Cardiac septum (tissue), 1 donor: ENCODE measurements at regions of chr7 and their contacts with region 1.

Region 1: DNA sequence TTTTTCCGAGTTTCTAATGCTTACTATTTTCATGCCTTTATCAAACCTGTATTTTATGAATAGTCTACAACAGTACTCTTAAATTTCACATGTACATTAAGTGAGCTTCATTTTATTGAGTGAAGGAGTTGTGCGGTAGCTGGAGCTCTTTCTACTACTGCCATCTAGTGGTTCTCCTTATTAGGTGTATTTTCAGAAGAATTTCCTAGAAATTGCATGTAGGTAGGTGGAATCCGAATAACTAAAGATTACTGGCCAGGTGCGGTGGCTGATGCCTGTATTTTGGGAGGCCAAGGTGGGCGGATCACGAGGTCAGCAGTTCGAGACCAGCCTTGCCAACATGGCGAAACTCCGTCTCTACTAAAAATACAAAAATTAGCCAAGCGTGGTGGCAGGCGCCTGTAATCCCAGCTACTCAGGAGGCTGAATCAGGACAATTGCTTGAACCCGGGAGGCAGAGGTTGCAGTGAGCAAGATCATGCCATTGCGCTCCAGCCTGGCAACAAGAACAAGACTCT is 38.3 kb downstream of the LRRC72 start:
- DNase-seq: no peak

Region 2: GRCh38 chr7:16078076-16078952 is 486.7 kb before region 1 on chr7:
- intact Hi-C with region 1: loop called (anchors 2 kb)
- DNase-seq: no peak

Region 3: DNA sequence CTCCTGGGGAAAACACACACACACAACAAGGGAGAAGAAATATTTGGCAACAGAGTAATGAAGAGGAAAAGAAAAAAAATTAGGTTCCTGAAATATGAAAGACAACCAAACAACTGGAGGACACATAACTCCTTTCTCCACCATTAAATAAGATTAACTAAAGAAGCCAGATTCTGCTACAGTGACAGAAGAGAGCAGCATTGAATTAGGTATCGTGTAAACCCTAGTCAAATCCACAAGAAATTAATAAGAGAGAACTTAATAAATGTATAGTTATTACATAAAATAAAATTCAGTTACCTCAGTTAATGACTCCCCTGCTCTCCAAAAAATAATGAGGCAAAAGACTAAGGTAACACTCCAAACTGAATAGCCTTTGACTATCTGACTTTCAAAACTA is 450.3 kb before region 1 on chr7:
- intact Hi-C with region 1: loop called (anchors 5 kb)
- DNase-seq: no peak

Region 4: DNA sequence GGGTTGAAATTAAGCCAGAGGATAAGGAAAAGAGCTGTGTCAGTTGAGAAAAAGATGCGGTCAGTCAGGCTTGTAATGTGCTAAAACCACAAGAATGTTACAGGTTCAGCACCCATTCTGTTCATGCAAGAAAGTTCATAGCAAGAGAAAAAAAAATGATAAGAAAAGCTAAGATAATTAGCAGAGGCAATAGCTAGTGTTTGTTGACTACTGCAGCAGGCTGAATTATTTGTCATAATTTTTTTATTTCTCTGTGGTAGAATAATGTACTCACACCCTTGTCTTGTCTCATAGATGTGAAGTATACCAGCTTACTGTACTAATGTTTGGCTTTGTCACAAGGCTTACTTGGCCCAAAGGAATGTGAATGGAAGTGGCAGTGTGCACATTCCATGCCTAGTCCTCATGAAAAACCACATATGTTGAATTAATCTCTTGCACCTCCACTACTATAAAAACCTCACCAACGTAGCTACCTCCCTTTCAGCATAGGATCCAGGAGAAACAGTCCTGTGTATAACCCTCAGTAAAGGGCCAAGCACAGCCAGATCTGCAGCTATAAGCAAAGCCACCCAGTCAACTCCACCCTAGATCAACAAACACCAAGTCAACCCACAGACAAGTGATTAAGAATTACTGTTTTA is 218.5 kb before region 1 on chr7:
- intact Hi-C with region 1: no loop called
- DNase-seq: no peak

Region 5: GRCh38 chr7:16409777-16410176 is 155.2 kb before region 1 on chr7:
- intact Hi-C with region 1: loop called (anchors 5 kb)
- DNase-seq: no peak

Region 6: DNA sequence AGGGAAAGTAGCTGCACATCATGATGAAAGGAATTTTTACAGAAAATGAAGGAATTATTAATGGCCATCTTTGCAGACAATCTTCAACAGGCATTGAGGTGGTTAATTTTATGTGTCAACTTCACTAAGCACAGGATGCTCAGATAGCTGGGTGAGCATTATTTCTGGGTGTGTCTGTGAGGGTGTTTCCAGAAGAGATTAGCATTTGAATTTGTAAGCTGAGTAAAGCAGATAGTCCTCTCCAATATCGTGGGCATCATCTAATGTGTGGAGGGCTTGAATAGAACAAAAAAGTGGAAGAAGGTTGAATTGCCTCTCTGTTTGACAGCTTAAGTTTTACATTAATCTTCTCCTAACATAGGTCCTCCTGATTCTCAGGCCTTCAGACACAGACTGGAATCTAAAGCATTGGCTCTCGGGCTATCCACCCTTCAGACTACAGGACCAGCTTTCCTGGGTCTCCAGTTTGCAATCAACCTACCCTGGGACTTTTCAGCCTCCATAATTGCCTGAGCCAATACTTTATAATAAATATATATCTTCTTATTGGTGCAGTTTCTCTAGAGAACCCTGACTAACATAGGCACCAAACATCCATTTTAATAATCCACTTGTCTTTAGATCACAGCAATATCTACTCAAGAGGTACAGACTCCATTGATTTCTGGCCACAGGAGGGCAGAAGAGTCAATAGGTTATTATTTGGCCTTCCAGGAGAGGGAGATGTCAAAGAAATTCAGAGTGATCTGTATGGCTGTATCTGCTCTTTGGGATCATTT is 133.1 kb before region 1 on chr7:
- intact Hi-C with region 1: loop called (anchors 5 kb)
- DNase-seq: no peak

Region 7: GRCh38 chr7:16524338-16524737 is 40.6 kb before region 1 on chr7:
- intact Hi-C with region 1: no loop called
- DNase-seq: no peak

Region 8: DNA sequence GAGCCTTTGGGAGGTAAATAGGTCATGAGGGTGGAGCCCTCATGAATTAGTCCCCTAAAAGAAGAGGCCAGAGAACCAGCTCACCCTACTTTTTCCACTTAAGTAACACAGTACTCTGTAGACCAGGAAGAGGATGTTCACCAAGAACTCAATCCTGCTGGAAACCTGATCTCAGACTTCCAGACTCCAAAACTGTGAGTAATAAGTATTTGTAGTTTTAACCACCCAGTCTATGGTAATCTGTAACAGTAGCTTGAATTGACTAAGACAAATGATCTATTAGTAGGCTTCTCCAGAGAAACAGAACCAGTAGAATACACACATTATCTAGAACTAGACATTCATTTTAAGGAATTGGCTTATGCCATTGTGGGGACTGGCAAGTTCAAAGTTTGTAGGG is 29.1 kb after region 1 on chr7:
- intact Hi-C with region 1: no loop called
- DNase-seq: no peak